Naive thymus-derived CD4-positive, alpha-beta T cell (primary cell): ENCODE measurements at regions of chr17 and their contacts with region 1.

Region 1: GRCh38 chr17:7435221-7435675 is at the start of gene TMEM102:
- DNase-seq: peak; percentile 92 to 99 (median 99)
- ATAC-seq: peak; percentile 94
- H3K4me3 ChIP-seq: peak within 1 kb of the TSS; percentile 65
- H3K4me3 Mint-ChIP-seq: peak within 1 kb of the TSS; percentile 86 to 96 (median 94)
- H3K27ac ChIP-seq: peak within 1 kb of the TSS; percentile 83
- H3K27ac Mint-ChIP-seq: peak within 1 kb of the TSS; percentile 89 to 97 (median 95)
- H3K4me1 ChIP-seq: peaks cover 16 to 38% of the 10 kb centered on the region in 2 donors
- H3K4me1 Mint-ChIP-seq: peaks cover 26 to 42% (median 36%) of the 10 kb centered on the region in 7 donors
- H3K27me3 ChIP-seq: peaks cover 0 to 9% of the 10 kb centered on the region in 2 donors
- H3K27me3 Mint-ChIP-seq: peaks cover 11 to 13% (median 12%) of the 10 kb centered on the region in 5 donors
- total RNA-seq, gene TMEM102: 8.2 to 19.1 (median 16.5) TPM

Region 2: DNA sequence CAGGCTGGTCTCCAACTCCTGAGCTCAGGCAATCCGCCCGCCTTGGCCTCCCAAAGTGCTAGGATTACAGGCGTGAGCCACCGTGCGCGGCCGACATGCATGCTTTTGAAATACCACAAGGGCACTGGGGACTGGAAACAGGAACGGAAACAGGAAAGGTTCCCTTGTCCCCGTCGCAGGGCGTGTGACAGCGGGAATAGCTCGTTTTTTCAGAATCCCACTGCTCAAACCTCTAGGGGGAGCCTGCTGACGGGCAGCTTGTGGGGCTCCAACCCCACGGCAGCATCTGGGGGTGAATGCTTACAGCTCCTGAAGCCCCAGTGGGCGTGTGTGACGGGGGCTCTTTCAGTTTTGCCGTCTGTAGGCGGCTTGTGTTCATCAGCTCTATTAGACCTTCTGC is 301.8 kb before region 1 on chr17:
- CTCF ChIA-PET with region 1: no interaction called
- POLR2A ChIA-PET with region 1: no interaction called
- intact Hi-C with region 1: no loop called
- DNase-seq: peak; percentile 19 to 40 (median 32)
- ATAC-seq: peak; percentile 9
- H3K4me3 ChIP-seq: peak overlapping the region; percentile 17
- H3K4me3 Mint-ChIP-seq: peak overlapping the region; percentile 53 to 81 (median 72)
- H3K27ac ChIP-seq: peak overlapping the region; percentile 65
- H3K27ac Mint-ChIP-seq: peak overlapping the region in 7 of 9 donors; percentile 67 to 98 (median 89)
- H3K4me1 ChIP-seq: peaks cover 6 to 20% of the 10 kb centered on the region in 2 donors
- H3K4me1 Mint-ChIP-seq: peaks cover 18 to 39% (median 28%) of the 10 kb centered on the region in 7 donors
- H3K27me3 ChIP-seq: no peaks in the 10 kb centered on the region
- H3K27me3 Mint-ChIP-seq: peaks cover 0 to 22% (median 3%) of the 10 kb centered on the region in 5 donors

Region 3: GRCh38 chr17:7252176-7253043 is 182.8 kb before region 1 on chr17 and contains the start of gene ELP5:
- CTCF ChIA-PET with region 1: no interaction called
- POLR2A ChIA-PET with region 1: no interaction called
- intact Hi-C with region 1: loop called (anchors 1 to 5 kb)
- DNase-seq: peak in 5 of 9 donors; percentile 73 to 90 (median 83)
- ATAC-seq: peak; percentile 69
- H3K4me3 ChIP-seq: peak within 1 kb of the TSS; percentile 91
- H3K4me3 Mint-ChIP-seq: peak within 1 kb of the TSS; percentile 85 to 98 (median 96)
- H3K27ac ChIP-seq: peak within 1 kb of the TSS; percentile 94
- H3K27ac Mint-ChIP-seq: peak within 1 kb of the TSS; percentile 95 to 100 (median 99)
- H3K4me1 ChIP-seq: peaks cover 22 to 32% of the 10 kb centered on the region in 2 donors
- H3K4me1 Mint-ChIP-seq: peaks cover 29 to 51% (median 42%) of the 10 kb centered on the region in 7 donors
- H3K27me3 ChIP-seq: no peaks in the 10 kb centered on the region
- H3K27me3 Mint-ChIP-seq: peaks cover 0 to 4% (median 0%) of the 10 kb centered on the region in 5 donors
- total RNA-seq, gene ELP5: 26.9 to 49.1 (median 32.9) TPM

Region 4: GRCh38 chr17:7351665-7352501 is 83.4 kb before region 1 on chr17 and contains the start of gene KCTD11:
- CTCF ChIA-PET with region 1: interaction called, 67 read pairs
- POLR2A ChIA-PET with region 1: interaction called, 29 read pairs
- intact Hi-C with region 1: loop called (anchors 1 kb)
- DNase-seq: peak; percentile 40 to 88 (median 58)
- ATAC-seq: peak; percentile 72
- H3K4me3 ChIP-seq: peak within 1 kb of the TSS; percentile 57
- H3K4me3 Mint-ChIP-seq: peak within 1 kb of the TSS; percentile 78 to 94 (median 88)
- H3K27ac ChIP-seq: peak within 1 kb of the TSS; percentile 74
- H3K27ac Mint-ChIP-seq: peak within 1 kb of the TSS; percentile 72 to 91 (median 86)
- H3K4me1 ChIP-seq: peaks cover 10 to 27% of the 10 kb centered on the region in 2 donors
- H3K4me1 Mint-ChIP-seq: peaks cover 14 to 62% (median 43%) of the 10 kb centered on the region in 7 donors
- H3K27me3 ChIP-seq: no peaks in the 10 kb centered on the region
- H3K27me3 Mint-ChIP-seq: no peaks in the 10 kb centered on the region
- total RNA-seq, gene KCTD11: 2.7 to 13.7 (median 4.0) TPM

Region 5: GRCh38 chr17:7478276-7479153 is 43.3 kb after region 1 on chr17:
- CTCF ChIA-PET with region 1: interaction called, 34 read pairs
- POLR2A ChIA-PET with region 1: interaction called, 116 read pairs
- intact Hi-C with region 1: loop called in 1 of 2 experiments (anchors 1 kb)
- DNase-seq: peak; percentile 53 to 83 (median 73)
- ATAC-seq: peak; percentile 56
- H3K4me3 ChIP-seq: peak overlapping the region; percentile 75
- H3K4me3 Mint-ChIP-seq: peak overlapping the region; percentile 90 to 99 (median 97)
- H3K27ac ChIP-seq: peak overlapping the region; percentile 100
- H3K27ac Mint-ChIP-seq: peak overlapping the region; percentile 90 to 99 (median 95)
- H3K4me1 ChIP-seq: peaks cover 26 to 49% of the 10 kb centered on the region in 2 donors
- H3K4me1 Mint-ChIP-seq: peaks cover 51 to 82% (median 70%) of the 10 kb centered on the region in 7 donors
- H3K27me3 ChIP-seq: no peaks in the 10 kb centered on the region
- H3K27me3 Mint-ChIP-seq: no peaks in the 10 kb centered on the region

Region 6: DNA sequence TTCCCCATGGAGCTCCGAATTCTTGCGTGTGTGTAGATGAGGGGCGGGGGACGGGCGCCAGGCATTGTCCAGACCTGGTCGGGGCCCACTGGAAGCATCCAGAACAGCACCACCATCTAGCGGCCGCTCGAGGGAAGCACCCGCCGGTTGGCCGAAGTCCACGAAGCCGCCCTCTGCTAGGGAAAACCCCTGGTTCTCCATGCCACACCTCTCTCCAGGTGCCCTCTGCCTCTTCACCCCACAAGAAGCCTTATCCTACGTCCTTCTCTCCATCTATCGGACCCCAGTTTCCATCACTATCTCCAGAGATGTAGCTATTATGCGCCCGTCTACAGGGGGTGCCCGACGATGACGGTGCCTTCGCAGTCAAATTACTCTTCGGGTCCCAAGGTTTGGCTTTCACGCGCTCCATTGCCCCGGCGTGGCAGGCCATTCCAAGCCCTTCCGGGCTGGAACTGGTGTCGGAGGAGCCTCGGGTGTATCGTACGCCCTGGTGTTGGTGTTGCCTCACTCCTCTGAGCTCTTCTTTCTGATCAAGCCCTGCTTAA is 125.9 kb after region 1 on chr17:
- CTCF ChIA-PET with region 1: interaction called, 16 read pairs
- POLR2A ChIA-PET with region 1: interaction called, 20 read pairs
- intact Hi-C with region 1: loop called (anchors 1 kb)
- DNase-seq: peak; percentile 60 to 86 (median 71)
- ATAC-seq: peak; percentile 76
- H3K4me3 ChIP-seq: peak overlapping the region; percentile 96
- H3K4me3 Mint-ChIP-seq: peak overlapping the region; percentile 87 to 97 (median 93)
- H3K27ac ChIP-seq: peak overlapping the region; percentile 92
- H3K27ac Mint-ChIP-seq: peak overlapping the region; percentile 90 to 100 (median 96)
- H3K4me1 ChIP-seq: peaks cover 17 to 54% of the 10 kb centered on the region in 2 donors
- H3K4me1 Mint-ChIP-seq: peaks cover 33 to 55% (median 49%) of the 10 kb centered on the region in 7 donors
- H3K27me3 ChIP-seq: no peaks in the 10 kb centered on the region
- H3K27me3 Mint-ChIP-seq: peaks cover 0 to 2% (median 0%) of the 10 kb centered on the region in 5 donors

Region 7: DNA sequence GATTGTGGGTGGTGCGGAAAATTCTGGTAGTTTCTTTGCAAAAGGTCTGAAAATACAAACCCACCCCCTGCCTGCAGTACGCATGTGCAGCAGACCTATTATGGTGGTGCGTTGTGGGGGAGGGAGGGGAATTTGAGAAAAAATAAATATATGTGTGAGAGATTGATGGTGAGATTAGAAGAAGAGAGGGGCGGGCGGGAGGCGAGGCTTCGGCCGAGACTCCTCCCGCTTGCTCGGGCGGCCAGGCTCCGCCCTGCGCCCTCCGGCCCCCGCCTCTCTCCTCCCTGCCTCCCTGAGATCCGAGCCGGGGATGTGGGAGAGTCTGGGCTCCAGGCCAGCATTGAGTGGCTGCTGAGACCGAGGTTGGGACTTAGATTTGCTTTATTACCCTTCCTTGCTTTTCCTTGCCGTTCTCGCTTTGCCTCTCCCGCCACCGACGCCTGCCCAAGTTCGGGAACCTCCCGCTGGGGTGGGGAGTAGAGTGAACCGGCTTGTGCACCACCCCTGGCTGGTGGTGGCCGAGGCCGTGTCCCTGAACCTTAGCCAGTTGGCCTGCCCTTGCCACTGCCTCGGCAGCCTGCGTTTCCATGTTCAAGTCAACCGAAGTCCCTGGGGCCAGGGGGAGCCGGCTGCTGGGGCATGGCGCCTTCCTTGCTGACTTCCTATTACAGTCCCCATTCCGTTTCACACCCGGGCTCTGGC is 452.4 kb after region 1 on chr17:
- CTCF ChIA-PET with region 1: no interaction called
- POLR2A ChIA-PET with region 1: no interaction called
- intact Hi-C with region 1: loop called in 1 of 2 experiments (anchors 1 kb)
- DNase-seq: peak; percentile 41 to 96 (median 93)
- ATAC-seq: peak; percentile 83
- H3K4me3 ChIP-seq: peak overlapping the region; percentile 61
- H3K4me3 Mint-ChIP-seq: no peak overlapping the region
- H3K27ac ChIP-seq: peak overlapping the region; percentile 91
- H3K27ac Mint-ChIP-seq: no peak overlapping the region
- H3K4me1 ChIP-seq: peaks cover 28 to 29% of the 10 kb centered on the region in 2 donors
- H3K4me1 Mint-ChIP-seq: peaks cover 0 to 17% (median 8%) of the 10 kb centered on the region in 7 donors
- H3K27me3 ChIP-seq: no peaks in the 10 kb centered on the region
- H3K27me3 Mint-ChIP-seq: no peaks in the 10 kb centered on the region